ENCODE measurements at regions of chr21 and their contacts with region 1.

Region 1: DNA sequence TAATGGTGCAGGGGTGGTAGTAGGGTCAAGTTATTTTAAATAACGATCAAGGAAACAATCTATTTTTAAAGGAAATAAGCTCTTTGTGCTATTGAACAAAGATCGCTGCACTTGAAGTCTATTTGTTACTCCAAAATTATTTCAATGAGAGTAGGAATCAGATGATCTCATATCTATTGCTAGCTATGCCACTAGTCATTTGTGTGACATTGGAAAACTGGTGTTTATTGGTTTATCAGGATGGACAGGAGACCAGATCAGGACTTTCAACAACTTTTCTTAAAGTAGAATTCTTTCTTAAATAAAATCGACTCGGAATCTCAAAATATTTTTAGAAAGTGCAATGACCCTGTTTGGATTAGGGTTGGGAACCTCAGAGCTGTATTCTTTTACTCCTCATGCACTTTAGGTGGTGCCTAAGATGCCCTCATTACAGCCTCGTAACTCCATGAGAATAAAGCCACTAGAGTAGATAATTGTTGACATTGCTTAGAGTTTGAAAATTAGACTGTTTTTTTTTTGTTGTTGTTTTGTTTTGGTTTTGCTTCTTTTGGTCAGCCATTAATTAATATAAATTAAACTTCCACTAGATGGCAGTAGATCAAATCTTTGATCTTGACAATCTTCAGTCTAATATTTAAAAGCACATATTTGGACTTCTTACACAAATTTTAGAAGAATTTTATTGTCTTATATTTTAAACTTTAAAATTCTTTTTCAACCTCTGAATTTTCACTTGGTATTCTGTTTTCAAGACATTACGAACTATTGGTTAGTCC is 352.4 kb downstream of the USP25 start:
- DNase-seq: peak; percentile 78
- H3K4me3 ChIP-seq: no peak overlapping the region
- H3K27ac ChIP-seq: peak overlapping the region; percentile 48
- H3K4me1 ChIP-seq: peaks cover 8% of the 10 kb centered on the region
- H3K27me3 ChIP-seq: no peaks in the 10 kb centered on the region
- CTCF ChIP-seq: peak in 1 of 2 donors; percentile 4
- POLR2A ChIP-seq: no peak

Region 2: GRCh38 chr21:15894596-15894995 is 187.6 kb before region 1 on chr21:
- CTCF ChIA-PET with region 1: interaction called, 6 read pairs
- POLR2A ChIA-PET with region 1: no interaction called
- dilution Hi-C with region 1: no loop called
- intact Hi-C with region 1: loop called (anchors 10 kb)
- DNase-seq: peak; percentile 36
- H3K4me3 ChIP-seq: no peak overlapping the region
- H3K27ac ChIP-seq: no peak overlapping the region
- H3K4me1 ChIP-seq: no peaks in the 10 kb centered on the region
- H3K27me3 ChIP-seq: no peaks in the 10 kb centered on the region
- CTCF ChIP-seq: peak in 1 of 2 donors; percentile 13
- POLR2A ChIP-seq: no peak

Region 3: GRCh38 chr21:16095005-16095404 is 12.8 kb after region 1 on chr21:
- CTCF ChIA-PET with region 1: interaction called, 16 read pairs
- POLR2A ChIA-PET with region 1: no interaction called
- dilution Hi-C with region 1: no loop called
- intact Hi-C with region 1: no loop called
- DNase-seq: no peak
- H3K4me3 ChIP-seq: no peak overlapping the region
- H3K27ac ChIP-seq: no peak overlapping the region
- H3K4me1 ChIP-seq: no peaks in the 10 kb centered on the region
- H3K27me3 ChIP-seq: no peaks in the 10 kb centered on the region
- CTCF ChIP-seq: no peak
- POLR2A ChIP-seq: no peak

Region 4: GRCh38 chr21:16302851-16303282 is 220.6 kb after region 1 on chr21:
- CTCF ChIA-PET with region 1: interaction called, 10 read pairs
- POLR2A ChIA-PET with region 1: no interaction called
- dilution Hi-C with region 1: no loop called
- intact Hi-C with region 1: no loop called
- DNase-seq: peak; percentile 67
- H3K4me3 ChIP-seq: no peak overlapping the region
- H3K27ac ChIP-seq: peak overlapping the region; percentile 40
- H3K4me1 ChIP-seq: peaks cover 53% of the 10 kb centered on the region
- H3K27me3 ChIP-seq: no peaks in the 10 kb centered on the region
- CTCF ChIP-seq: no peak
- POLR2A ChIP-seq: no peak

Measured in endothelial cell of umbilical vein (primary cell).